ENCODE measurements at regions of chr12 and their contacts with region 1.

Region 1: DNA sequence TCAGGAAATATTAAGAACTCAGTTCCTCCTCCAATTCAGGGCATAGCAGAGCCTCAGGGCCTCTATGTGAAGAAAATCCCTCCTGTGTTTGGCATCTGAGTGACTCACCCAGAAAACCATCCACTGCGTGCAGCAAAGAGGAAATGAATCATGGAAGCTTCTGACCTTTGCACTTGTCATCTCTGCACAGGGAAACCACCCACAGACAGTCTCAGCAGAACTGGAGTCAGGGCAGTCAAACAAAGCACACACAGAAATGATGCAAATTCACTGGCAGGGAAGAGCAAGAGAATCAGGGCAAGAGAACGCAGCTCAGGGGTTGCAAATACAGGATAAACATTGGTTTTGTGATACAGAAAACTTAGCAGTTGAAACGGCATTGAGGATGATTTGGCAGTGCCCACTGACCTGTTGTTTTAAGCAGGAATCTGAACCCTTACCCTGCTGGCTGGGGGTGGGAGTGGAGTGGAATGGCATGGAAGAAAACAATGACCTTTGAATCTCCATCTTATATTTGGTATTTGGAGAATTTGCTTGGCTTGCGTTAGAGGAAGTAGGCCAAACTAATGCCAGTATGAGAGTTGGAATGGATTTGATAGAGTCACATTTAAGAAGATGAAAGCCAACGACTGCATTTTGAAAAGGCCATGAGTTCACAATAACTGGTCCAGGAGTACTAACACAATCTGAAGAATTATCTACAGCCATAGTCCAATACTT is 53.5 kb downstream of the PHLDA1 start:
- DNase-seq: peak in 8 of 9 donors; percentile 4 to 80 (median 38)
- ATAC-seq: peak; percentile 94
- H3K4me3 ChIP-seq: no peak overlapping the region
- H3K4me3 Mint-ChIP-seq: peak overlapping the region in 7 of 10 donors; percentile 24 to 64 (median 51)
- H3K27ac ChIP-seq: peak overlapping the region; percentile 21
- H3K27ac Mint-ChIP-seq: peak overlapping the region; percentile 41 to 90 (median 74)
- H3K4me1 ChIP-seq: peaks cover 15 to 26% of the 10 kb centered on the region in 2 donors
- H3K4me1 Mint-ChIP-seq: peaks cover 21 to 58% (median 26%) of the 10 kb centered on the region in 7 donors
- H3K27me3 ChIP-seq: no peaks in the 10 kb centered on the region
- H3K27me3 Mint-ChIP-seq: no peaks in the 10 kb centered on the region

Region 2: DNA sequence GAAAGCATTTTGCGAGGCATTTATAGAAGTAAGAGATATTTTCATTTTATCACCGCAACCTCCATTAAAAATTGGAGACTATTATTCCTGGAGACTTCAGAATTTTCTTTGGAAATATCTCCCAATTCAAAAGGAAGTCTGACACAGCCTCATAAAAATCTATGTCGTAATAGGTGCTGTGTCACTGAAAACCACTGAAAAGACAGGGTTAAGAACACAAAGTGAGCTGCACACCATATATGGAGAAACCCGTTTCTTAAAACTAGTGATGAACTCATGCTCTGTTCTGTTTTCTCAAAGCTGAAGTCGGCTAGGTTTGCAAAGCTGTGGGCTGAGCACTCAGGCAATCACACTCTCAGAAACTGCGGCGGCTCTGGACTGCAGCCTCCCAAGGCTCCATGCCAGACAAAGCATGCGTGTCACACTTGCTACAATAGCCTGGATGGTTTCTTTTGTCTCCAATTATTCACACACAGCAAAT is 497.6 kb before region 1 on chr12 and contains the start of gene GLIPR1:
- CTCF ChIA-PET with region 1: no interaction called
- POLR2A ChIA-PET with region 1: no interaction called
- intact Hi-C with region 1: loop called in 1 of 2 experiments (anchors 2 kb)
- DNase-seq: peak; percentile 54 to 83 (median 76)
- ATAC-seq: peak; percentile 86
- H3K4me3 ChIP-seq: peak within 1 kb of the TSS; percentile 82
- H3K4me3 Mint-ChIP-seq: peak within 1 kb of the TSS; percentile 86 to 99 (median 97)
- H3K27ac ChIP-seq: peak within 1 kb of the TSS; percentile 73
- H3K27ac Mint-ChIP-seq: peak within 1 kb of the TSS; percentile 92 to 100 (median 97)
- H3K4me1 ChIP-seq: peaks cover 49 to 54% of the 10 kb centered on the region in 2 donors
- H3K4me1 Mint-ChIP-seq: peaks cover 50 to 85% (median 75%) of the 10 kb centered on the region in 7 donors
- H3K27me3 ChIP-seq: no peaks in the 10 kb centered on the region
- H3K27me3 Mint-ChIP-seq: no peaks in the 10 kb centered on the region
- total RNA-seq, gene GLIPR1: 28.2 to 132 (median 48.7) TPM

Region 3: GRCh38 chr12:75658901-75659383 is 319.2 kb before region 1 on chr12:
- CTCF ChIA-PET with region 1: no interaction called
- POLR2A ChIA-PET with region 1: no interaction called
- intact Hi-C with region 1: loop called in 1 of 2 experiments (anchors 5 kb)
- DNase-seq: no peak
- ATAC-seq: no peak
- H3K4me3 ChIP-seq: no peak overlapping the region
- H3K4me3 Mint-ChIP-seq: peak overlapping the region in 1 of 10 donors; percentile 16
- H3K27ac ChIP-seq: no peak overlapping the region
- H3K27ac Mint-ChIP-seq: peak overlapping the region in 1 of 9 donors; percentile 26
- H3K4me1 ChIP-seq: no peaks in the 10 kb centered on the region
- H3K4me1 Mint-ChIP-seq: peaks cover 0 to 34% (median 0%) of the 10 kb centered on the region in 7 donors
- H3K27me3 ChIP-seq: no peaks in the 10 kb centered on the region
- H3K27me3 Mint-ChIP-seq: peaks cover 0 to 6% (median 0%) of the 10 kb centered on the region in 5 donors

Region 4: GRCh38 chr12:75933101-75933500 is 45.0 kb before region 1 on chr12:
- CTCF ChIA-PET with region 1: no interaction called
- POLR2A ChIA-PET with region 1: no interaction called
- intact Hi-C with region 1: loop called (anchors 1 to 10 kb)
- DNase-seq: no peak
- ATAC-seq: no peak
- H3K4me3 ChIP-seq: no peak overlapping the region
- H3K4me3 Mint-ChIP-seq: no peak overlapping the region
- H3K27ac ChIP-seq: no peak overlapping the region
- H3K27ac Mint-ChIP-seq: no peak overlapping the region
- H3K4me1 ChIP-seq: peaks cover 0 to 14% of the 10 kb centered on the region in 2 donors
- H3K4me1 Mint-ChIP-seq: peaks cover 0 to 26% (median 9%) of the 10 kb centered on the region in 7 donors
- H3K27me3 ChIP-seq: no peaks in the 10 kb centered on the region
- H3K27me3 Mint-ChIP-seq: peaks cover 0 to 16% (median 2%) of the 10 kb centered on the region in 5 donors

Region 5: DNA sequence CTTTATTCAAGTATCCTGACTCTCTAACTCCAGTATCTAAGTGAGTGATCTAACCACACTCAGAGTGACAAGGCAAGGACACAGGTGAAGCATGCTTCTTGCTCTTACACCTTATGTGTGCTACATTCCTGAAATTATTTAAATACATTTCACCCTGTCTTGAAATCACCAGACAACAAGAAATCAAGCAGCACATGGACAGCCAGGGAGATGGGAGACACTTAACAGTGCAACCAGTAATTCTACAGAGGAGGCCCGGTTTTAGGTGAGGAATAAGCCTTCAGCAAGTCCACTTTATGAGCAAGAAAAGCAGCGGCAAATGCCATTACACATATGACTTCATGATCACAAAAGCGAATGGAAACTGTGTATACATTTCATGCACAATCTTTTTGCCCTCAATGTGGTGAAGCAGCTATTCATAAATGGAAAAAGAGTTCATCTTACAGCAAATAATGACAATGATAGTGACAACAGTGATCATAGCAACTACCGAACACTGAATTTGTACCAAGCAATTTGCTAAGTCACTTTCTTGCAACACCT is 16.1 kb after region 1 on chr12:
- CTCF ChIA-PET with region 1: no interaction called
- POLR2A ChIA-PET with region 1: interaction called, 3 read pairs
- intact Hi-C with region 1: loop called in 1 of 2 experiments (anchors 1 kb)
- DNase-seq: no peak
- ATAC-seq: no peak
- H3K4me3 ChIP-seq: no peak overlapping the region
- H3K4me3 Mint-ChIP-seq: no peak overlapping the region
- H3K27ac ChIP-seq: no peak overlapping the region
- H3K27ac Mint-ChIP-seq: peak overlapping the region in 1 of 9 donors; percentile 1
- H3K4me1 ChIP-seq: no peaks in the 10 kb centered on the region
- H3K4me1 Mint-ChIP-seq: peaks cover 0 to 16% (median 0%) of the 10 kb centered on the region in 7 donors
- H3K27me3 ChIP-seq: no peaks in the 10 kb centered on the region
- H3K27me3 Mint-ChIP-seq: no peaks in the 10 kb centered on the region

Region 6: DNA sequence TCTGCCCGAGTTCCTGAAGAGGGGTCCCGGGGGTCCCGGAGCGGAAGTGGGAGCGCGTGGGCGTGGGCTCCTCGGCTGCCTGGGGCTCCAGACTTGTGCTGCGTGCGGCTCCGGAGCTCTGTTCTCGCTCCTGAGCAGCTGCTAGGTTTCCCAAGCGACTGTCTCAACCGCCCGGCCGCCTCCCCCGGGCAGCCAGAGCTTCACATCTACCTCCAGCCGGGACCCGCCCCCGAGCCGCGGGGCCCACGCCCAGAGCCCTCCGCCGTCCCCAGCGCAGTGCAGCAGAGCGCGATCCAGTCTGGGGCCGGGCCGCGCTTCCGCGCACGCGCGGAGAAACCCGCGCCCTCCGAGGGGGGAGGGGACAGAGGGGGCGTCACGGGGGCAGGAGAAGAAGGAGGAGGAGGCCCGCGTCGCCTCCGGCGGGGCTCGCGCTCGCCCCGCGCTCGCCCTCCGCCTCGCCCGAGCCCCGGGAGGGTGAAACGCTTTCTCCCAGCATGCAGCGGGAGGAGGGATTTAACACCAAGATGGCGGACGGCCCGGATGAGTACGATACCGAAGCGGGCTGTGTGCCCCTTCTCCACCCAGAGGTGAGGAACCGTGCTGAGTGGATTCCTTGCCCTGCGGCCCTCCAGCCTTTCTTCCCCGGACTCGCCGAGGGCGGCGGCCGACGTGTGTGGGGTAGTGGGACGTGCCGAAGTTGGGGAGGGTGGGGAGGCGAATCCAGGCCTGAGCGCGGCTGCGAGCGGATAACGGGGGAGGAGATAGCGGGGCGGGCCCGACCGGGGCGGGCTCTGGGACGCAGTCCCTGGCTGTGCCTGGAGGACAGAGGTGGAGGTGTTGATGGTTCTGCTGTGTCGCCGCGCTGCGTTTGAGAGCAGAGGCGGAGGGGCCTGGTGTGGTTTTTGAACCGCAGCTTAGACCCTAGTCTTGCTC is 785.9 kb after region 1 on chr12 and contains the start of gene ZDHHC17:
- CTCF ChIA-PET with region 1: no interaction called
- POLR2A ChIA-PET with region 1: no interaction called
- intact Hi-C with region 1: loop called in 1 of 2 experiments (anchors 1 kb)
- DNase-seq: peak; percentile 90 to 95 (median 93)
- ATAC-seq: peak; percentile 90
- H3K4me3 ChIP-seq: peak within 1 kb of the TSS; percentile 84
- H3K4me3 Mint-ChIP-seq: peak within 1 kb of the TSS; percentile 92 to 98 (median 97)
- H3K27ac ChIP-seq: peak within 1 kb of the TSS; percentile 94
- H3K27ac Mint-ChIP-seq: peak within 1 kb of the TSS; percentile 95 to 99 (median 97)
- H3K4me1 ChIP-seq: peaks cover 8 to 13% of the 10 kb centered on the region in 2 donors
- H3K4me1 Mint-ChIP-seq: peaks cover 17 to 57% (median 46%) of the 10 kb centered on the region in 7 donors
- H3K27me3 ChIP-seq: no peaks in the 10 kb centered on the region
- H3K27me3 Mint-ChIP-seq: peaks cover 0 to 13% (median 0%) of the 10 kb centered on the region in 5 donors
- total RNA-seq, gene ZDHHC17: 27.3 to 60.9 (median 56.3) TPM

Region 7: DNA sequence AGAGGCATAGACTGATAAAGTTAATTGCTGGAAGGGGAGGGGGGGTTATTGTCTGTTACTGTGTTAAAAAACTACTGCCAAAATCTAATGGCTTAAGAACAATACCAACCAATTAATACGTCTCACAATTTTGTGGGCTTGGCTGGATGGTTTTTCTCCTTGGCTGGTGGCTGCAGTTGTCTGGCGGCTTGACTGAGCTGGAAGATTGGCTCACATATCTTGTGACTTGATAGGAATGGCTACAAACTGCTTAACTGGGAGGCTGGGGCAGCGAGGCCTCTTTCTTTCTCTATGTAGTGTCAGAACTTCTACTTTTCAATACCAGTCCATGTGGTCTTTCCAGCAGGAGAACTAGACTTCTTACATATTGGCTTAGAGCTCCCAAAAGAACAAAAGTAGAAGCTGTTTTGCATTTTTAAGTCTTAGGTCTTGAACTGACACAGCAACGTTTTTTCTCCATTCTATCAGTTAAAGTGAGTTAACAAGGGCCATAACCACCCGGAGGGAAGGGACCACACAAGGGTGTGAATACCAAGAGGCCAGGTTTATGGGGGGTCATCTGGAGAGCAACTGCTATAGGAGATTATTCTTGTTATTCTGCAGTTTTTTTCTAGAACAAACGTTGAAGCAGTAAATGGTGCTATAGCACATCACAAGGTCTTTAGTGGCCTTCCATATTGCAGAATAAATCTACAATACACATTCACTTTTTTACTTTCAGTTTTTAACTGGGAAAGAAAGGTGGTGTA is 832.7 kb after region 1 on chr12:
- CTCF ChIA-PET with region 1: no interaction called
- POLR2A ChIA-PET with region 1: no interaction called
- intact Hi-C with region 1: no loop called
- DNase-seq: no peak
- ATAC-seq: no peak
- H3K4me3 ChIP-seq: no peak overlapping the region
- H3K4me3 Mint-ChIP-seq: no peak overlapping the region
- H3K27ac ChIP-seq: no peak overlapping the region
- H3K27ac Mint-ChIP-seq: peak overlapping the region in 2 of 9 donors; percentile 9 to 22
- H3K4me1 ChIP-seq: no peaks in the 10 kb centered on the region
- H3K4me1 Mint-ChIP-seq: peaks cover 0 to 8% (median 0%) of the 10 kb centered on the region in 7 donors
- H3K27me3 ChIP-seq: no peaks in the 10 kb centered on the region
- H3K27me3 Mint-ChIP-seq: no peaks in the 10 kb centered on the region

Measured in naive thymus-derived CD4-positive, alpha-beta T cell (primary cell).